ENCODE measurements at regions of chr9 and their contacts with region 1.

Region 1: DNA sequence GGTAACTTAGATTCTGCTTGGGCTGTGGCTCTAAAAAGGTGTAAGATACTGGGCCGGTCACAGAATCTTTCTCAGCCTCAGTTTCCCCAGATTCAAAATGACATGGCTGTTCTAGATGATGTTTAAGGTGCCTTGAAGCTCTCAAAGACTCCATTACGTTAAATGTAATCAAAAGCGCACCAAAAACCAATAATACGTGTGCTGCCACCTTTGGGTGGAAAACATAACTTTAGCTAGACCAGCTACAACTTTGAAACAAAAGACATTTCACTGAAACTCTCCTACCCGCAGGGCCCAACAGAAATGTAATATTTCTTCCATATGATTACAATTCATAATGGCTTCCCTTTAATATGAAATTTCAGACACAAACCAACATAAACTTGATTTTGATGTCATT is 35.0 kb upstream of the PCSK5 start:
- DNase-seq: peak in 1 of 5 donors; percentile 7
- ATAC-seq: peak in 1 of 4 donors; percentile 51
- H3K4me3 ChIP-seq: no peak overlapping the region
- H3K27ac ChIP-seq: no peak overlapping the region
- H3K4me1 ChIP-seq: peaks cover 0 to 3% (median 0%) of the 10 kb centered on the region in 12 donors
- H3K27me3 ChIP-seq: no peaks in the 10 kb centered on the region
- CTCF ChIP-seq: peak; percentile 33 to 70 (median 52)
- POLR2A ChIP-seq: no peak

Region 2: DNA sequence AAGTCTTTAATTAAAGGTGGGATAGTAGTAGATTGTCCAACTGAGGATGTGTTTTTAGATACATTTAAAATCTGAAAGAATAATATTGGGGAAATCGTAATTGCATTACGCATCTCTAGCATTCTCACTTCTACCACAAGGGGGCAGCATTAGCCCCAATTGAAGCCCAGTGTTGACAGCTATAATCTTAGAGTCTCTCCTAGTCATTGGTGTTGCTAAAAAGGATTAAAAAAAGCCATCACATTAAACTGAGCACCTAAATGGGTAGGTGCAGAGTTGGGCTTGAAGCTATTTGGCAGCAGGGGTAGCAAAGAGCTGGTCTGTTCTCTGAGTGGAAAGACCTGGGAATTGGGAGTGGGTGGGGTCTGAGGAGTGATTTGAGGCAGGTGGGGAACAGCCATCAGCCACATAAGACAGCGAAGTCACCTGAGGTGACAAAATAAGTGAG is 590.0 kb before region 1 on chr9:
- intact Hi-C with region 1: loop called in 5 of 10 experiments (anchors 5 kb)
- DNase-seq: peak in 2 of 5 donors; percentile 8 to 37
- ATAC-seq: peak in 3 of 4 donors; percentile 66 to 74 (median 74)
- H3K4me3 ChIP-seq: no peak overlapping the region
- H3K27ac ChIP-seq: no peak overlapping the region
- H3K4me1 ChIP-seq: peaks cover 0 to 7% (median 0%) of the 10 kb centered on the region in 12 donors
- H3K27me3 ChIP-seq: no peaks in the 10 kb centered on the region
- CTCF ChIP-seq: peak; percentile 80 to 97 (median 90)
- POLR2A ChIP-seq: no peak

Region 3: DNA sequence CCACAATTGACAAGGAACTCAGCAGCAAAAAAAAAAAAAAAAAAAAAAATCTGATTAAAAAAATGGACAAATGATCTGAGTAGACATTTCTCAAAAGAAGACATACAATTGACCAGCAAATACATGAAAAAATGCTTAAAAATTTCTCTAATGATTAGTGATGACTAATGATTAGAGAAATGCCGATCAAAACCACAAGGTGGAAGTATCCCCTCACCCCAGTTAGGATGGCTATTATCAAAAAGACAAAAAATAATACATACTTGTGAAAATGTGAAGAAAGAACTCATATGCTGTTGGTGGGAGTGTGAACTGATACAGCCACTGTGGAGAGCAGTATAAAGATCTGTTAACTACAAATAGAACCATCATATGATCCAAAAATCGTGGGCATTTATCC is 521.9 kb before region 1 on chr9:
- intact Hi-C with region 1: loop called in 6 of 10 experiments (anchors 5 to 10 kb)
- DNase-seq: no peak
- ATAC-seq: no peak
- H3K4me3 ChIP-seq: no peak overlapping the region
- H3K27ac ChIP-seq: no peak overlapping the region
- H3K4me1 ChIP-seq: no peaks in the 10 kb centered on the region
- H3K27me3 ChIP-seq: no peaks in the 10 kb centered on the region
- CTCF ChIP-seq: peak in 11 of 12 donors; percentile 25 to 62 (median 46)
- POLR2A ChIP-seq: no peak

Region 4: DNA sequence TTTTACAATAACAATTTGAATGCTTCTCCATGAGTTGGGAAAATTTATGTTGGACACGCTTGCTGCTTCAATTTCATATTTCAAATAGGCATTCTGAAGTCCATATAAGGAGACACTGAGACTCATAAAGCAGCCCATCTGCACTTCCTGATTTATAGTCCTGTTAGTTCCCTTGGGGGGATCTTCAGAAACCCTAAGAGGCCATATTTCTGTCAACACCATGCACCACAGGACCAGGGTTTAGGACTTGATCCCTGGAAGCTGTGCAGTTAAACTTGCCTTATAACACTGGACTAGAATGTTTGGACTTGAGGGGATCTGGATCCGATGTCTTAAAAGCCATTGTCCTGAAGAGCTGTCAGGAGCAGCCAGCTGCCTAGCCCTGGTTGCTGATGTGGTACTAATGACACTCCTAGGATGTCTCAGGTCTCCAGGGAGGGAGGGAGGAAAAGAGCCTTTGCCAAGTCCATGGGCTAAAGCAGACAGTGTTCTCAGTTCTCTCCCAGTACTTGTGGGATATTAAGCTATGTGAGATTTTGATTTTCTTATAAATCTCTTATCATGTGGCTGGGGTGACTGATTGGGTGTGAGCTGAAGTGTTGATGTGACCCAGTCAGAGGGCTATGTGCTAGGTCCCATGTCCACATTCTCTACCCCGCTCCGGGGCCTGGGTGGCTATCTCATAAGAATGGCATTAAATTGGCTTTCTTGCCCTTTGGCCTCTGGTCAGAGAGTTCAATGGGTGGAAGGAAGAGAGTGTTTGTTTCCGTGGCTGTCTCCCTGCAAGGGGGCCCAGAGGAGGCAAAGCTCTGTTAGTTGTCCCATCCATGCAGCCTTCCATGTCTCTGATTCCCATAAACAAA is 367.4 kb before region 1 on chr9:
- intact Hi-C with region 1: loop called in 1 of 10 experiments (anchors 10 kb)
- DNase-seq: peak in 2 of 5 donors; percentile 28
- ATAC-seq: peak in 2 of 4 donors; percentile 38 to 47
- H3K4me3 ChIP-seq: no peak overlapping the region
- H3K27ac ChIP-seq: no peak overlapping the region
- H3K4me1 ChIP-seq: peaks cover 0 to 27% (median 6%) of the 10 kb centered on the region in 12 donors
- H3K27me3 ChIP-seq: no peaks in the 10 kb centered on the region
- CTCF ChIP-seq: no peak
- POLR2A ChIP-seq: no peak

Region 5: DNA sequence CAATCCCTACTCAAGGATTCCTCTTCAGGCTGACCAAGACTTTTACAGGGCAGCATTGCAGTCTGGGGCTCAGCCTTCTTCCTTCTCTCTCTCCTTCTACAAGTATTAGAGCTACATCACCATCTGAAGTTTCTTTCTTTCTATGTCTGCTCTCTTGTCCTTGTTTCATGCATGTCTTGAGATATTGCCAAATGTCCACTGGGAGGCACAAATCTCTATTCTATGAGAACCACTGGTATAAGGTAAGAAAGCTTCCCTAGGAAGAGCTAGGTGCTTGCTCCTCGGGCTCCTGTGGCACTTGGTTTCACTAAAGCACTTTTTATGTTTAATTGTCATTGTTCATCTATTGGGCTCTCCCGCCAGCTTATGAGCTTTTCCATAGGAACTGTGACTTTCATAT is 254.2 kb before region 1 on chr9:
- intact Hi-C with region 1: loop called in 3 of 10 experiments (anchors 5 to 10 kb)
- DNase-seq: no peak
- ATAC-seq: no peak
- H3K4me3 ChIP-seq: no peak overlapping the region
- H3K27ac ChIP-seq: no peak overlapping the region
- H3K4me1 ChIP-seq: peaks cover 0 to 7% (median 0%) of the 10 kb centered on the region in 12 donors
- H3K27me3 ChIP-seq: no peaks in the 10 kb centered on the region
- CTCF ChIP-seq: peak in 7 of 12 donors; percentile 5 to 30 (median 15)
- POLR2A ChIP-seq: no peak

Region 6: DNA sequence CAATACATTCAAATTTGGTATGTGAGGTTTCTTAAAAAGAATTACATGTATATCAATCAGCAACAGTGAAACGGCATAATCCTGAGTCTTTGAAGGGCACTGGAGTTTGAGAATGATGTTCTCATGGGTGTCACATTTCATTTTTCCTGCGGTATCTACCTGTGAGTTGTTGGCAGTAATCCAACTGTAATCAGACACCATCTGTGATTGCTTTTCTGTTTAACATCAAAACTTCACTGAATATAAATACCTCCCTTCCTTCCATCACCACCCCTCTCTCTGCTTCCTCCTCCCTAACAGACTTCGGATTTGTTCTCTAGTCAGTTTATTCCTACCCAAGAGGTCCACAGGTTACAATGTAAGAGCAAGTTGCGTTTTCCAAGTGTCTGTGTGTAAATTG is 240.2 kb before region 1 on chr9:
- intact Hi-C with region 1: loop called in 3 of 10 experiments (anchors 5 to 10 kb)
- DNase-seq: no peak
- ATAC-seq: no peak
- H3K4me3 ChIP-seq: no peak overlapping the region
- H3K27ac ChIP-seq: no peak overlapping the region
- H3K4me1 ChIP-seq: peaks cover 0 to 8% (median 0%) of the 10 kb centered on the region in 12 donors
- H3K27me3 ChIP-seq: no peaks in the 10 kb centered on the region
- CTCF ChIP-seq: no peak
- POLR2A ChIP-seq: no peak

Region 7: GRCh38 chr9:75624998-75625397 is 230.5 kb before region 1 on chr9:
- intact Hi-C with region 1: loop called in 2 of 10 experiments (anchors 10 kb)
- DNase-seq: peak in 1 of 5 donors; percentile 30
- ATAC-seq: peak; percentile 37 to 48 (median 40)
- H3K4me3 ChIP-seq: no peak overlapping the region
- H3K27ac ChIP-seq: no peak overlapping the region
- H3K4me1 ChIP-seq: peaks cover 0 to 10% (median 0%) of the 10 kb centered on the region in 12 donors
- H3K27me3 ChIP-seq: no peaks in the 10 kb centered on the region
- CTCF ChIP-seq: no peak
- POLR2A ChIP-seq: no peak

Measured in heart left ventricle (tissue), 16 donors.